Cardiac septum (tissue), 1 donor: ENCODE measurements at regions of chr12 and their contacts with region 1.

Region 1: DNA sequence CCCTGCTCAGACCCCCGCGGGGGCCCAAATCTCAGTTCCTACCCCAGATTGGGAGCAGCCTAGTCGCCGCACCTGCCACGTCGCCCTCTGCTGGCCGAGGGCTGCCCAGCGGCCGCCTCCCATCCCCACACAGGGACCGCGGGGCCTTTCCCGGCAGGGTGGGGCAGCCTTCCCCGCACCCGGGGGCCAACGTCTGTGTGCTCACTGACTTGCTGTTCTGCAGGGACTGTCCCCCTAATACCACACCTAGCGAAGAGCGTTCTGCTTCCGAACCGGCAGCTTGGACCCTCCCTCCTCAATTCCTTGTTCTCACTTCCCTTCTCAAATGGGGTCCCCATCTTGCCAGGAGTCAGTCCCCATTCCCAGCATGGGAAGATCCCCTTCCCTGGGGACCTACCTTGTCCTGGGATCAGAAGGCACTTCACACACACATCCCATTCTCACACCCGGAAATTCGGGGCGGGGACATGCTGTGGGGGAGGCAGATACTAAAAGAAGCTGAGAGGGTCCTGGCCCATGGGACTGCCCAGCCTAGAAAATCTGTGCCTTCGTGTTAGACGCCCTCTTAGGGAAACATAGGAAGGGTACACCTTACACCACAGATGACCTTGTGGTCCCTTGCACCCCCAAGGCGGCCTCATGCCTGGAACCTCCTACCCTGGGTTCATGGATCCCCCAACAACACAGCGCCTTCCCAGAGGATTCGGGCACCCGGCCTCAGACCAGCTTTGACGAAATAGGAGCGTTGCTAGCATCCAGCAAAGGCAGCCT is 16.4 kb downstream of the ACVRL1 start:
- DNase-seq: peak; percentile 87

Region 2: DNA sequence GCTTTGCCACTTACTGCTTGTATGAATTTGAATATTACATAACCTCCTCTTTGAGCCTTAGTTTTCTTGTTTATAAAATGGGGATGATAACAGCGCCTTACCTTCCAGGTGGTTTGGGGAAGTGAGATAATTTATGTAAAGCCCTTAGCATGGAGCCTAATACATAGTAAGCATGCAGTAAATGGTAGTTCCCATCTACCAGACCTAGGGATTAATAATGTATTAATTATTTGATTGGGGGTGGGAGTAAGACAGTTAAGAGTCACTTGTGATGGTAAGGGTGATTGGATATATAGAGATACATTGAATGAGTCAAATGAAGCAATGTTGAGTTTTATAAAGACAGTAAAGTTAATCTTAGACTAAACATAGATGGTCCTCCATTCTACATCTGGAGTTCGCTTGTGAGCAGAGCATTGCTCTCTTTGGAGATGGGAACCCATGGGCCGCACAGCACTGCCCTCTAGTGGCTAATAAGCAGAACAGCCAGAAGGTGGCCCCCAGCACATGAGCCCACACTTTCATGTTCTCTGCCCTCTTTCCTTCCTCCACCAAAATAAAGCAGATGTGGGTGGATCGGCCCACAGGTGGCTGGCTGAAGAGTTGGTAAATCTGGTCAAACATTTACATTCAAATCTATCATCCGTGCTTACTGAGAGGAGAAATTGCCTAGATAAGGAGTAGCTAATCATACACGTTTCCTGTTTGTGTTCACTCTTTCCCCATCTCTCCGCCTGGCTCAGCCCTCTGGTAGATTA is 56.5 kb after region 1 on chr12:
- intact Hi-C with region 1: loop called (anchors 2 kb)
- DNase-seq: peak; percentile 90